ENCODE measurements at regions of chr3 and their contacts with region 1.

Region 1: DNA sequence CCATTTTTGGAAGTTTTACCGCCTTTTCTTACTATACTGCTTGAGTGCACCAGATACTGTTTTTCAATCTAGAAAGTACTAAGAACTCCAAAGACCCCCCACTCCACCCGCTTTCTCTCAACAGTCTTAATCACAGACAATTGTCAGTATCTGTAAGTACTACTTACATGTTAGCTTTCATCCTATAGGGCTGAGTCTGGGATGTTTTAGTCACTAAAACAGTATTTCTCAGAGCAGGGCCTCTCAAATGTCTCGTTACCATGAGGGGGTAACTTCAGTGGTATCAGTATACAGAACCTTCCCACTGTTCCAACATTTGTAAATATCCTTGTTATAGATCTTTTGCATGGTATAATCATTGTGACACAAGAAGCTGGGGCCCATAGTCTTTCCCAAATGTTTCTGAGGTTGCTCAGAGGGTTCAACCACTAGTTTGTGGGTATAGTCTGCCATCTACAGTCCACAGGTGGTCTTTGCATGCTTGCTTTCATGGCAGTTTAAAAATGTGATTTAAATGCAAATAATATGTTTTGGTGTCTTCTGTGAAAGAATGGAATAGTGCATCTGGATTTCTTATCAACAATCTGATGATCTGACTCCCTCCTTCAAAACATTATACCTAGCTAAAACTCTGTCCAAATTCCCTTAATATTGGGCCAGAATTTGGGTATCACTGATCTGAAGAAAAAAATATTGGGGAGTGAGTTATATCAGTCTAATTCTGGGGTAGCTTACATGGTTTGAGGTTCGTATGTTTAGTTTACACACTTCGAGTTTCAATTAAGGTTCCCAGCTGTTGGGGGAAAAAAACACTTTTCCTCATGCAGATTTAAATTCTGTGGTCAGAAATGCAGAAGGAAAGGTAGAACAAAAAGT is 18.0 kb upstream of the DNAJC13 start:
- DNase-seq: peak; percentile 75
- H3K4me3 Mint-ChIP-seq: no peak overlapping the region
- H3K27ac Mint-ChIP-seq: no peak overlapping the region
- H3K4me1 Mint-ChIP-seq: no peaks in the 10 kb centered on the region
- H3K27me3 Mint-ChIP-seq: peaks cover 20% of the 10 kb centered on the region

Region 2: GRCh38 chr3:131794766-131795388 is 604.4 kb before region 1 on chr3:
- intact Hi-C with region 1: loop called (anchors 5 kb)
- DNase-seq: peak; percentile 75
- H3K4me3 Mint-ChIP-seq: no peak overlapping the region
- H3K27ac Mint-ChIP-seq: no peak overlapping the region
- H3K4me1 Mint-ChIP-seq: peaks cover 5% of the 10 kb centered on the region
- H3K27me3 Mint-ChIP-seq: peaks cover 10% of the 10 kb centered on the region

Region 3: GRCh38 chr3:131821191-131821762 is 578.0 kb before region 1 on chr3:
- intact Hi-C with region 1: no loop called
- DNase-seq: peak; percentile 10
- H3K4me3 Mint-ChIP-seq: no peak overlapping the region
- H3K27ac Mint-ChIP-seq: no peak overlapping the region
- H3K4me1 Mint-ChIP-seq: no peaks in the 10 kb centered on the region
- H3K27me3 Mint-ChIP-seq: no peaks in the 10 kb centered on the region

Region 4: DNA sequence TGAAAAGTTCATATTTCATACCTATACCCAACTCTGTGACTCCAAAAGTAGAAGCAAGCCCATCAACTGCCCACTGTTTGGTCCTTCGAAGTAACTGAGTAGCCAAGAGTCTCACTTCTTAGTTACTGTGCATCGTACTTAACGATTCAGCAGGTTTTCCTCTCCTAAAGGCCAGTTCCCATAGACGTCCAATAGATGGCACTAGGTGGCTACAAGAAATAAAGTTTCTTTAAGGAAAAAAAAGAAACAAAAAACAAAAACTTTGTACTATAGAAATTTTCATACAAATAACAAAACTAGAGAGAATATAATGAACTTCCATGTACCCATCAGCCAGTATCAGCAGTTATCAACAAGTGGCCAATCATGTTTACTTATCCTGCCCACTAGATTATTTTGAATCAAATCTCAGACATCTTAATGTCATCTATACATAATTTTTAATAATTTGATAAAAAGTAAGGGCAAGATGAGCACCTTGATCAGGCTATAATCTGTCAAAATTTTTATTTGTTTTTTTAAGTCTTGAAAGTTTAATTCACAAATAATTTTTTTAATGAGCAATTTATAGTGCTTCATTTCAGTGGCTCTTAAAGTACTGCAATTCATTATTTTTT is 145.9 kb before region 1 on chr3:
- intact Hi-C with region 1: loop called (anchors 10 kb)
- DNase-seq: peak; percentile 61
- H3K4me3 Mint-ChIP-seq: no peak overlapping the region
- H3K27ac Mint-ChIP-seq: no peak overlapping the region
- H3K4me1 Mint-ChIP-seq: no peaks in the 10 kb centered on the region
- H3K27me3 Mint-ChIP-seq: peaks cover 6% of the 10 kb centered on the region

Region 5: DNA sequence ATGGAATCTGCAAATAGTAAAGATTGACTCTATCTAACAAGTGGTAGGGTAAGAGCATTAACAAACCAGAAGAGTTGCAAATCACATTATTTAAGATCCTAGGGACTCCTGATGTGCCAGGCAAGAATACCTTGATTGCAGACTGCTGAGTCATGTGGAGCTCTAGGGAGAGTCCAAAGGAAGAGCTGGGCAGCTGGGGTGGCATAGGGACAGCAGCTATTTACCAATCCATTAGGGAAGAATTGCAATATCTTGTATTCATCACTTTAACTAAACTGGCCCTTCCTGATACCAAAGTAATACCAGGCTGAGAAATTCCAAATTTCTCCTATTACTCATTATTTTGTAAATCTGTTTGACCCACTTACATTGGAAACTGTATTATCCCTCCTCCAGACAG is 134.3 kb before region 1 on chr3:
- intact Hi-C with region 1: no loop called
- DNase-seq: no peak
- H3K4me3 Mint-ChIP-seq: no peak overlapping the region
- H3K27ac Mint-ChIP-seq: no peak overlapping the region
- H3K4me1 Mint-ChIP-seq: no peaks in the 10 kb centered on the region
- H3K27me3 Mint-ChIP-seq: peaks cover 2% of the 10 kb centered on the region

Region 6: DNA sequence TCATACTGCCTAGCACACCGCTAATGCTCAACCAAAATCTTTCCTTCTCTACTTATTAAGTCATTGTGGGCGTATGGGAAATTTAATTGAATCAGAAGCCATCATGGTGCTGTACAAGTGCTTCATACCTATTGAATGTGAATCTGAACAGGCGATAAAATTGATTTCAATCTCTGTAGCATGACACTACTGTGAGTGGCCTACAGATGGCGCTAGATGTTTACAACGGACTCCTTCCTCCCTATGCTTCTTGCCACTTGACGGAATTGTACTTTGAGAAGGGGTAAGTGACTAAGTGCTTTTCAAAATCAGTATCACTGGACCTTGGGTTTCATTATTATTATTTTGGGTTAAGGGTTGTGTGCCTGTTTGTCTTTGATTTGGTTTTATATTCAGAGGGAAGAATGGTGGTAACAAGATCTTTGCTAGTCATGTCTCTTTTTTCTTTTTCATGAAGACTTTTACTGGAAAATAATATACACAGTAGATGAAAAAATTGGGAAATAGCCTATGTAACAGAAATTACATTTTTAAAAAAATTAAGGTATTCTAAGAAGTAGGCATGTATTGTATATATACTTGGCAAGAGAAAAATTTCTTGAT is 46.6 kb before region 1 on chr3:
- intact Hi-C with region 1: loop called (anchors 1 kb)
- DNase-seq: peak; percentile 89
- H3K4me3 Mint-ChIP-seq: no peak overlapping the region
- H3K27ac Mint-ChIP-seq: no peak overlapping the region
- H3K4me1 Mint-ChIP-seq: peaks cover 1% of the 10 kb centered on the region
- H3K27me3 Mint-ChIP-seq: peaks cover 19% of the 10 kb centered on the region

Region 7: GRCh38 chr3:132469326-132469725 is 70.0 kb after region 1 on chr3:
- intact Hi-C with region 1: no loop called
- DNase-seq: no peak
- H3K4me3 Mint-ChIP-seq: no peak overlapping the region
- H3K27ac Mint-ChIP-seq: no peak overlapping the region
- H3K4me1 Mint-ChIP-seq: no peaks in the 10 kb centered on the region
- H3K27me3 Mint-ChIP-seq: no peaks in the 10 kb centered on the region

Measured in activated CD4-positive, alpha-beta T cell treated with anti-CD3 and anti-CD28 coated beads, Interleukin-2, amount 10 ng/mL, durations not matched to agents 24 days and 14 days (primary cell).